H1 (cell line): ENCODE measurements at regions of chr6 and their contacts with region 1.

Region 1: GRCh38 chr6:55445648-55446204 is 118.5 kb downstream of the GFRAL start:
- DNase-seq: no peak
- H3K4me3 ChIP-seq: no peak overlapping the region
- H3K27ac ChIP-seq: no peak overlapping the region
- H3K4me1 ChIP-seq: no peaks in the 10 kb centered on the region
- H3K27me3 ChIP-seq: no peaks in the 10 kb centered on the region
- CTCF ChIP-seq: peak in 2 of 3 experiments; percentile 31 to 35; a peak in 2 of 4 replicates
- EP300 ChIP-seq: no peak
- POLR2A ChIP-seq: no peak
- RAD21 ChIP-seq: peak; percentile 74 to 82

Region 2: DNA sequence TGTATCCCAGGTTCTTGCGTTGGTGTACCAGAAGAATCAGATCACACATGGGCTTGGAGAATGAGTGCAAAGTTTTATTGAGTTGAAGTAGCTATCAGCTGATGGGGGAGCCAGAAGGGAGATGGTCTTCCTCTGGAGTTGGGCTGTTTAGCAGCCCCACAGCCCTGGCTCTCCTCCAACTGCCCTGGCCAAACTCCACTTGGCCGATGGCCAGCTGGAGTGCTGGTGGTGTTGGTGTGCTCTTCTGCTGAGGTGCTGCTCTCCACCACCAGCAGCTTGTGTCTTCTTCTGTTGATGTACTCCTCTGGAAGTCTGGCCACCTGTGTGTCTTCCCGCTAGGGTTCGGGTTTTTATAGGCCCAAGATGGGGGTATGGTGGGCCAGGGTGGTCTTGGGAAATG is 964.6 kb before region 1 on chr6:
- CTCF ChIA-PET with region 1: no interaction called
- POLR2A ChIA-PET with region 1: no interaction called
- DNase-seq: no peak
- H3K4me3 ChIP-seq: no peak overlapping the region
- H3K27ac ChIP-seq: no peak overlapping the region
- H3K4me1 ChIP-seq: no peaks in the 10 kb centered on the region
- H3K27me3 ChIP-seq: no peaks in the 10 kb centered on the region
- CTCF ChIP-seq: no peak
- EP300 ChIP-seq: no peak
- POLR2A ChIP-seq: no peak
- RAD21 ChIP-seq: no peak

Region 3: GRCh38 chr6:55276745-55277530 is 168.8 kb before region 1 on chr6:
- CTCF ChIA-PET with region 1: interaction called, 12 read pairs
- POLR2A ChIA-PET with region 1: no interaction called
- DNase-seq: peak in 1 of 2 experiments; percentile 50
- H3K4me3 ChIP-seq: no peak overlapping the region
- H3K27ac ChIP-seq: no peak overlapping the region
- H3K4me1 ChIP-seq: peaks cover 0 to 7% (median 2%) of the 10 kb centered on the region in 4 experiments; a peak in 4 of 7 replicates
- H3K27me3 ChIP-seq: no peaks in the 10 kb centered on the region
- CTCF ChIP-seq: peak in 2 of 3 experiments; percentile 49 to 67; a peak in 3 of 4 replicates
- EP300 ChIP-seq: no peak
- POLR2A ChIP-seq: no peak
- RAD21 ChIP-seq: peak; percentile 80 to 85

Region 4: GRCh38 chr6:55433446-55434130 is 12.1 kb before region 1 on chr6:
- CTCF ChIA-PET with region 1: interaction called, 11 read pairs
- POLR2A ChIA-PET with region 1: no interaction called
- DNase-seq: no peak
- H3K4me3 ChIP-seq: no peak overlapping the region
- H3K27ac ChIP-seq: no peak overlapping the region
- H3K4me1 ChIP-seq: peaks cover 0 to 7% (median 0%) of the 10 kb centered on the region in 4 experiments; a peak in 3 of 7 replicates
- H3K27me3 ChIP-seq: no peaks in the 10 kb centered on the region
- CTCF ChIP-seq: no peak
- EP300 ChIP-seq: no peak
- POLR2A ChIP-seq: no peak
- RAD21 ChIP-seq: no peak

Region 5: DNA sequence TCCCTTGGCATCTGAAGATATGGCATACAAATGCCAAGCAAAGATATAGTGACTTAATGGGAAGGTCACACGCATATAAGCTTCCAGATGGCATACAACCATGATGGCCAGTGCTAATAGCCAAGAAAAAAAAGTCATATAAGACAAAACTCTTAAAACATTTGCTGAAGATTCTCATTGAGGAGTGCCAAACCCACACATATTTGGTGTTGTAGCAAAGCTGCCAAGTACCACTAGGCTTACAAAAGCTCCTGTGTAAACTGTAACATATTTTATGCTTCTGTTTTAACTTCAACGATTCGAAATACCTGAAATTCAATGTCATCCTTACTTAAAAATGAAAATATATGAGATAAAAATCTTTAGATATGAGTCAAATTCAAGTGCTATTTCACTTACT is 10.3 kb after region 1 on chr6:
- CTCF ChIA-PET with region 1: interaction called, 23 read pairs
- POLR2A ChIA-PET with region 1: no interaction called
- DNase-seq: no peak
- H3K4me3 ChIP-seq: no peak overlapping the region
- H3K27ac ChIP-seq: no peak overlapping the region
- H3K4me1 ChIP-seq: no peaks in the 10 kb centered on the region
- H3K27me3 ChIP-seq: no peaks in the 10 kb centered on the region
- CTCF ChIP-seq: no peak
- EP300 ChIP-seq: no peak
- POLR2A ChIP-seq: no peak
- RAD21 ChIP-seq: no peak

Region 6: GRCh38 chr6:55941702-55942101 is 496.0 kb after region 1 on chr6:
- CTCF ChIA-PET with region 1: interaction called, 17 read pairs
- POLR2A ChIA-PET with region 1: no interaction called
- DNase-seq: no peak
- H3K4me3 ChIP-seq: no peak overlapping the region
- H3K27ac ChIP-seq: no peak overlapping the region
- H3K4me1 ChIP-seq: no peaks in the 10 kb centered on the region
- H3K27me3 ChIP-seq: no peaks in the 10 kb centered on the region
- CTCF ChIP-seq: peak in 1 of 3 experiments; percentile 20; a peak in 2 of 4 replicates
- EP300 ChIP-seq: no peak
- POLR2A ChIP-seq: no peak
- RAD21 ChIP-seq: peak; percentile 44 to 55

Region 7: DNA sequence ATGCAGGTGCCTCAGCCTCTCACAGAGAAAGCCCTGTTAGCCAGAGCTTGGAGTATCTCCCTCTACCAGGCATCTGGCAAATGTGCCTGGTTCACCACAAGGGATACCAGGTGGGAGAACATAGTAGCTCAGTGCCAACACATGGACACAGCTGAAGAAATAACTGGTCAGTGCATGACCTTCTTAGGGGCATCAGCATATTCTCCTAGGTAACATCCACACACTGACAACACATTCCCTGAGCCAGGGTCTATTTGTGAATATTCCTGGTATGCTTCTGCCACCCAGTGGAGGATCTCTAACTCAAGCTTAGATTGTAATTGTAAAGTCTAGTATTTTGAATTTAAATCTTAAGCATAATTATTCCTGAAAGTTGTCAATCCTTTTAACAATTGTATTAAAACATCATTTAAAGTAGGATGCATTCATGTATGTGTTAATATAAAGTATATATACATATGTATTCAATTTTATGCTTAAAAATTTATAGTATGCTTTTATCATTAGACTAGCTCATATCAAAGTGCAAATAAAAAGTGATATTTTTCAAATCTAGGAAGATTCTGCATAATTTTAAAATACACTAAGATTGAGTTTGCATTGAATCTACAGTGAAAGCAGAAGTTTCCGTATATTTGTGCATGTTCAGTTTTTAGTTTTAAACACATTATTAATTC is 846.9 kb after region 1 on chr6:
- CTCF ChIA-PET with region 1: interaction called, 36 read pairs
- POLR2A ChIA-PET with region 1: no interaction called
- DNase-seq: peak in 1 of 2 experiments; percentile 50
- H3K4me3 ChIP-seq: no peak overlapping the region
- H3K27ac ChIP-seq: no peak overlapping the region
- H3K4me1 ChIP-seq: peaks cover 0 to 3% (median 2%) of the 10 kb centered on the region in 4 experiments; a peak in 3 of 7 replicates
- H3K27me3 ChIP-seq: no peaks in the 10 kb centered on the region
- CTCF ChIP-seq: peak in 2 of 3 experiments; percentile 67 to 75; a peak in 3 of 4 replicates
- EP300 ChIP-seq: no peak
- POLR2A ChIP-seq: no peak
- RAD21 ChIP-seq: peak; percentile 94 to 95